ENCODE measurements at regions of chr6 and their contacts with region 1.

Region 1: GRCh38 chr6:149045404-149045803 is 272.1 kb upstream of the TAB2 start:
- DNase-seq: peak in 4 of 14 experiments; percentile 38 to 57 (median 46)
- ATAC-seq: peak; percentile 90
- H3K4me3 ChIP-seq: no peak overlapping the region
- H3K4me3 Mint-ChIP-seq: peak overlapping the region; percentile 22
- H3K27ac ChIP-seq: no peak overlapping the region
- H3K27ac Mint-ChIP-seq: peak overlapping the region; percentile 7
- H3K4me1 ChIP-seq: peaks cover 23% of the 10 kb centered on the region
- H3K4me1 Mint-ChIP-seq: peaks cover 39% of the 10 kb centered on the region
- H3K27me3 ChIP-seq: no peaks in the 10 kb centered on the region
- H3K27me3 Mint-ChIP-seq: no peaks in the 10 kb centered on the region
- CTCF ChIP-seq: no peak

Region 2: DNA sequence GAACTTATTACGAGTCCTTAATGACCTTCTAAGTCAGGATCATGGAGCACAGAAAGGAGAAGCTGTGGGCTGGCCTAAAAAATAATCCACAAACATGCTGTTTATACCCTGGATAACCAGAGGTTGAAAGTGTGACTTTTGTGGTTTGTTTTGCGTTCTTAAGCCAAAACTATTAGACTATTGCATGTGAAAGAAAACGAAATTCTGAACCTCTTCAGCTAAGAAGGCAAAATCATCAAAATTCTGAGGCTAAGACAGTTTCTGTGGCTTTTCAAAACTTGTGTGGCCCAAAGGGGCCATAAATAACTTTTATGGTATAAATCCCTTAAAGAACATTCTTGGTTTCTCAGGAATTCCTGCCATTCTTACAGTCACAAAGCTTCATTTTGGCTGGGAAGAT is 47.5 kb before region 1 on chr6:
- CTCF ChIA-PET with region 1: no interaction called
- POLR2A ChIA-PET with region 1: no interaction called
- intact Hi-C with region 1: no loop called
- DNase-seq: no peak
- ATAC-seq: no peak
- H3K4me3 ChIP-seq: no peak overlapping the region
- H3K4me3 Mint-ChIP-seq: no peak overlapping the region
- H3K27ac ChIP-seq: no peak overlapping the region
- H3K27ac Mint-ChIP-seq: no peak overlapping the region
- H3K4me1 ChIP-seq: peaks cover 6% of the 10 kb centered on the region
- H3K4me1 Mint-ChIP-seq: peaks cover 7% of the 10 kb centered on the region
- H3K27me3 ChIP-seq: no peaks in the 10 kb centered on the region
- H3K27me3 Mint-ChIP-seq: no peaks in the 10 kb centered on the region
- CTCF ChIP-seq: no peak

Region 3: DNA sequence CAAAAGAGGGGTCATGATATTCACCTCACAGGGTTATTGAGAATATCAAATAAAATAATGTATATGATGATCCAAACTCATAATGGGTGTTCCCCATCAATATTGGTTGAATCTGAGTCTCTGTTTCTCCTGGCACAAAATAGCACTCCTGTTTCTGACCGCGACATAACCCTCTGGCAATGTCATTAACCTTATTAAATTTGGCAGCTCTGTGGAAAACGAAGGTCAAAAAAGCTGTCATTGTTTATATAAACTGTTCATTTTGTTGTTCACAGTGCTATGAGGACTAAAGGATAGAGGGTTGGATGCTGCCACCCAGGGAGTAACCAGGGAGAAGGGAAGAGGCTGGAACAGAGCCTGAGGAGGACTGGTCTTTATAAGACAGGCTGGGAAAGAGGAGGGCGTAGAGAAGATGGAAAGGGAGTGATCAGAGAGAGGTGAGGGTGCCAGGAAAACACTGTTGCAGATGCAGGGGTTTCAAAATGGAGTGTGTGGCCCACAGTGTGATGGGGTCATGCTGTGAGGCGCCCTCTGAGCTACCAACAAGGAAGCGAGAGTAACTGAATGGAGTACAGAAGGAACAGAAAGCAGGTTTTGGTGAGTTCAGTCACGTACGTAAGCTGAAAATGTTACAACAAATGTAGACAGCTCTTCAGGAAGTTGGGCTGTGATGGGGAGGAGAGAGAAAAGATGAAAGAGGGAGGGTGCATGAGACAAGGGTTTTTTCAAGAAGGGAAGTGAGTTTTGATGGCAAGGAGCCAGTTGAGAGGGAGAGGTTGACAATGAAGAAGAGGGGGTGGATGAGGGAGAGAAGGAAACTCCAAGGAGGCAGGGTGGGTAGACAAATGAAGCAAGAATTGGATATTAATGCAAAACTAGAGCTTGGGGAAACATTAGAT is 20.5 kb after region 1 on chr6:
- CTCF ChIA-PET with region 1: interaction called, 3 read pairs
- POLR2A ChIA-PET with region 1: interaction called, 12 read pairs
- intact Hi-C with region 1: loop called in 1 of 2 experiments (anchors 2 kb)
- DNase-seq: peak in 13 of 14 experiments; percentile 11 to 91 (median 36)
- ATAC-seq: peak; percentile 96
- H3K4me3 ChIP-seq: peak overlapping the region; percentile 25
- H3K4me3 Mint-ChIP-seq: peak overlapping the region; percentile 16
- H3K27ac ChIP-seq: peak overlapping the region; percentile 75 to 83
- H3K27ac Mint-ChIP-seq: peak overlapping the region; percentile 86
- H3K4me1 ChIP-seq: peaks cover 28% of the 10 kb centered on the region
- H3K4me1 Mint-ChIP-seq: peaks cover 37% of the 10 kb centered on the region
- H3K27me3 ChIP-seq: no peaks in the 10 kb centered on the region
- H3K27me3 Mint-ChIP-seq: no peaks in the 10 kb centered on the region
- CTCF ChIP-seq: no peak